Adrenal gland (tissue), 19 donors: ENCODE measurements at regions of chr1 and their contacts with region 1.

Region 1: DNA sequence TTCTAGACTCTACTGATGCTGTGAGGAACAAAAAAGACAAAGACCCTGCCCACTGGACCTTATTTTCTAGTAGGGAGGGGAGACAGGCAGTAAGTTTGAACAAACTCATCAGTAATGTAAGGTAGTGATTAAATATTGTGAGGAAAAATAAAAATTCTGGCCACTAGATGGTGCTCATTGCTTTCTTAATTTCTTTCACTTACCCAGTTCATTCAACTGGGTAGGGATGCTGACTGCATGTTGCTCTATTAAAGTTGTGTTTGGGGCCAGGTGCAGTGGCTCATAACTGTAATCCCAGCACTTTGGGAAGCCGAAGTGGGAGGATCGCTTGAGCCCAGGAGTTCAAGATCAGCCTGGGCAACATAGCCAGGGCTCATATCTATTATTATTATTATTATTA is 6.3 kb upstream of the KYAT3 start:
- DNase-seq: peak in 1 of 7 donors; percentile 21
- H3K4me3 ChIP-seq: no peak overlapping the region
- H3K27ac ChIP-seq: no peak overlapping the region
- H3K4me1 ChIP-seq: peaks cover 0 to 1% of the 10 kb centered on the region in 2 donors
- H3K27me3 ChIP-seq: no peaks in the 10 kb centered on the region
- CTCF ChIP-seq: peak; percentile 50 to 77 (median 69)
- POLR2A ChIP-seq: no peak

Region 2: DNA sequence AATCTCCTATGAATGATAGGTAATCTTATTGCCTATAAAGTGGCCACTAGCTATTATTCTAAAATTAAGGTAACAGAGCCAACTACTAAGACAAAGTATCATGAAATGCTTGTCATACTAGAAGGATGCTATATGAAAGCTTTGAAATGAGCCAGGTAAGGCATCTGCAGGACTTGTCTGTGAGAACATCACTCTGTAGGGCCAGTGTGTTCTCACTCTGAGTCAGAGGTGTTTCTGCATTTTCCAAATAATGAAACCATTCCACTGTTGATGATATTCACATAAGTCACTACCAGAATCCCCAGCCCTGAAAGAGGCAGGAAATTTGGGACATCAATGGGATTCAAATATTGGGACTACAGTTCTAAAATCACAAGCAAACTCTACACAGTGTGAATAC is 299.7 kb after region 1 on chr1:
- intact Hi-C with region 1: no loop called
- DNase-seq: no peak
- H3K4me3 ChIP-seq: no peak overlapping the region
- H3K27ac ChIP-seq: no peak overlapping the region
- H3K4me1 ChIP-seq: no peaks in the 10 kb centered on the region
- H3K27me3 ChIP-seq: no peaks in the 10 kb centered on the region
- CTCF ChIP-seq: no peak
- POLR2A ChIP-seq: no peak

Region 3: DNA sequence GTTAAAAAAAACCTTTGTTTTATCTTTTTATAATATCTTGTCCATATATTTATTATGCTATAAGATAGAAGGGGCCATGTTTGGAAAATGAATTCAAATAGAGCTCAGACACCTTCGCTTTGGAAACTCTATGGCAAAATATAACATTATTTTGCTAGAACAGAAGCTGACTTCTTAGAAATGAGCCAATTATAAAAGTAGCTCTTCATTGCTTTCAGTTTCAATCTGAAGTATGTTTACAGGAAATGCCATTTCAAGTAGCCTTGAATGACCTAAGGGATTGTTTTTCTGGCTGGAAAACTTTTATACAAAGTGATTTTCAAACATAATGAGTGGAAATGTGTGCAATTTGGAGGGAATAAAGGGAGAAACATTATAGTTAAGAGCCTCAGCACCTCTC is 311.8 kb after region 1 on chr1:
- intact Hi-C with region 1: no loop called
- DNase-seq: no peak
- H3K4me3 ChIP-seq: peak overlapping the region in 1 of 4 donors; percentile 44
- H3K27ac ChIP-seq: peak overlapping the region; percentile 35 to 63 (median 56)
- H3K4me1 ChIP-seq: peaks cover 9 to 24% of the 10 kb centered on the region in 2 donors
- H3K27me3 ChIP-seq: no peaks in the 10 kb centered on the region
- CTCF ChIP-seq: no peak
- POLR2A ChIP-seq: no peak

Region 4: DNA sequence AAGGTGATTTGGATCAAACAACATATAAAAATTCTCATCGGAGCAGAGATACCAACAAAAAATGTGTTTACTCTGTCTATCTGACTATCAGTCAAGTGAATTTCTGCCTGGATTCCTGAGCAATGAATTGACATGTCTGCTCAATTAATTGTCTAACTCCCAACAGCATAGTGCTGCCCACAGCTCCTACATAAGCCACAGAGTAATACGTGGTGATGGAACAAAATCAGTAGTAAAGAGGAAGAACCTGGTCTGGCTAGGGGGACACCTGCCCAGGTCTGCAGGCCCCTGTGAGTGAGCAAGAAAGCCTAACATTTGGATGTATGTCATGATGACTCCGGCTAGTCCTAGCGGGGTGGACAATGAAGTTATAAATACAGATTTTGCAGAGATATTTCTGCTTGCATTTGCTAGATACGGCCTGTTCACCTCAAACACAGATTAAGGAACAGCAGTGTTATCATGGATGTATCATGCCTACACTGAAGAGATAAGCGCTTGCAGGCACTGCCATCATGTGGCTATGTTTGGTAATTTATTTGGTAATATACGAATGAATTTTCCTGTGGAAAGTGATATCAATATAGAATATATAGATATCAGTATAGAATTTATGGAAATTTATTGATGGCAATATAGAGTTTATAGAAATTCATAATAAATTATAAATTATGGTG is 456.3 kb after region 1 on chr1:
- intact Hi-C with region 1: loop called (anchors 10 kb)
- DNase-seq: peak in 6 of 7 donors; percentile 22 to 74 (median 56)
- H3K4me3 ChIP-seq: no peak overlapping the region
- H3K27ac ChIP-seq: no peak overlapping the region
- H3K4me1 ChIP-seq: no peaks in the 10 kb centered on the region
- H3K27me3 ChIP-seq: no peaks in the 10 kb centered on the region
- CTCF ChIP-seq: peak; percentile 56 to 88 (median 82)
- POLR2A ChIP-seq: no peak